ENCODE measurements at regions of chr5 and their contacts with region 1.

Region 1: DNA sequence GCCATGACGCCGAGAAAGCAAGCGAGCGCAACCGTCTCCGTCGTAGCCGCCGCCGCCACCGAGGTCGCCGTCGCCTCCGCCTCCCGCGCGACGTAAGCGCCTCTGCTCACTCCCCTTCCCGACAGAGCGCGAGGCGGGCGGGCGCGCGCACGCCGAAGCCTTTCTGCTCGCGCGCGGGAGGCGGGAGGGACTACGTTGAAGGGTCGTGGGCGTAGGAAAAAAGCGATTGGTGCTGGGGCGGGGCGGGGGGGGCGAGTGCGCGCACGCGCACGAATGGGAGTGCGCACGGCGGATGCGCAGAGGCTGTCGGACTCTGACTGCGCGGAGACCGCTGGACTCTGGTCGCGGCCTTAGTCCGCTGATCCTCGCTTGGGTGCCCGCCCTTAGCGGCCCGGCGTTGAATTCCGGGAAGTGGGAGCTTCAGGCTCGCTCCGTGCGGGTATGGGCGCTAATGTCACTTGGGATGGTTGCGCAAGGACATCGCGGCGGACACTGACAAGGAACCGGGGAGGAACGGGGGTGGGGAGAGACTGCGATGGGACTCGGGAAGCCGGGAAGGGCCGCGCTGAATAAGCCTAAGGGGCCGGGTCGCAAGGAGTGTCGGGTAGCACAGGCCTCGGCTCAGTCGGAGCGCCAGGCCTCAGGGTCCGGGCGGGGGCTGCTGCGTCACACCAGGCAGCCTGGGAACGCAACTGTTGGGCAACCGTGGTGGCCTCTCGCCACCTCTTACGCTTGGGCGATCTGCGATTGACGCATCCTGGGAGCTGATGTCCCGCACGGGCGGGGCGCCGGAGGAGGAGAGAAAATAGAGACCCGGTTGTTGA is at the start of gene CHD1:
- DNase-seq: peak; percentile 95
- H3K4me3 Mint-ChIP-seq: peak within 1 kb of the TSS; percentile 100
- H3K27ac Mint-ChIP-seq: peak within 1 kb of the TSS; percentile 98
- H3K4me1 Mint-ChIP-seq: peaks cover 65% of the 10 kb centered on the region
- H3K27me3 Mint-ChIP-seq: no peaks in the 10 kb centered on the region
- total RNA-seq, gene CHD1: 45.4 to 47.5 TPM

Region 2: DNA sequence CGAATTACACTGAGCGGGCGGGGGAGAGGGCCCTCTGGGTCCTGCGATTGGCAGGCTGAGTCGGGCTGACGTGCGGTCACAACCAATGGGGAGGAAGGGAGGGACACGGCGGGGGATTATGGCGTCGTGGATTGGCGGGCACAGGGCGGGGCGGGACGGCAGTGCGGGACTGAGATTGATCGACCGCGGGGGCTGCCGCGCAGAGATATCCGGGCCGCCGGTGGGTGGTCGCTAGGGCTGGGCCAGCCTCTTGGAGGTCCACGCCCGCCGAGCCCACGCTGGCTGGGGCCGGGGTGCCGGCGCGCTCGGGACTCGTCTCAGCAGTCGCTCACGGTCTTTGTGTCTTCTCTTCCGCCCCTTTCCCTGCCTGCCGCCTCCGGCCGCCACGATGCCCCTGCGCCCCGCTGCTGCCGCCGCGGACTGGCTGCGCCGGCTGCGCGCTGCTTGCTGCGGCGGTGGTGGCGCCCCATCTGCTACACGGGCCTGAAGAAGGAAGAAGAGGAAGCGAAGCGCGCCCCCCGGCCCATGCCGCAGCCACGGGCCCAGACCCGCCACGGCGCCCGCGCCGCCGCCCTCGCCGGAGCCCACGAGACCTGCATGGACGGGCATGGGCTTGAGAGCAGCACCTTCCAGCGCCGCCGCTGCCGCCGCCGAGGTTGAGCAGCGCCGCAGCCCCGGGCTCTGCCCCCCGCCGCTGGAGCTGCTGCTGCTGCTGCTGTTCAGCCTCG is 155.5 kb before region 1 on chr5 and contains the start of gene RGMB:
- CTCF ChIA-PET with region 1: interaction called, 4 read pairs
- POLR2A ChIA-PET with region 1: interaction called, 11 read pairs
- DNase-seq: peak; percentile 88
- H3K4me3 Mint-ChIP-seq: peak within 1 kb of the TSS; percentile 80
- H3K27ac Mint-ChIP-seq: peak within 1 kb of the TSS; percentile 60
- H3K4me1 Mint-ChIP-seq: peaks cover 47% of the 10 kb centered on the region
- H3K27me3 Mint-ChIP-seq: peaks cover 58% of the 10 kb centered on the region
- total RNA-seq, gene RGMB: 0.60 to 0.65 TPM

Region 3: DNA sequence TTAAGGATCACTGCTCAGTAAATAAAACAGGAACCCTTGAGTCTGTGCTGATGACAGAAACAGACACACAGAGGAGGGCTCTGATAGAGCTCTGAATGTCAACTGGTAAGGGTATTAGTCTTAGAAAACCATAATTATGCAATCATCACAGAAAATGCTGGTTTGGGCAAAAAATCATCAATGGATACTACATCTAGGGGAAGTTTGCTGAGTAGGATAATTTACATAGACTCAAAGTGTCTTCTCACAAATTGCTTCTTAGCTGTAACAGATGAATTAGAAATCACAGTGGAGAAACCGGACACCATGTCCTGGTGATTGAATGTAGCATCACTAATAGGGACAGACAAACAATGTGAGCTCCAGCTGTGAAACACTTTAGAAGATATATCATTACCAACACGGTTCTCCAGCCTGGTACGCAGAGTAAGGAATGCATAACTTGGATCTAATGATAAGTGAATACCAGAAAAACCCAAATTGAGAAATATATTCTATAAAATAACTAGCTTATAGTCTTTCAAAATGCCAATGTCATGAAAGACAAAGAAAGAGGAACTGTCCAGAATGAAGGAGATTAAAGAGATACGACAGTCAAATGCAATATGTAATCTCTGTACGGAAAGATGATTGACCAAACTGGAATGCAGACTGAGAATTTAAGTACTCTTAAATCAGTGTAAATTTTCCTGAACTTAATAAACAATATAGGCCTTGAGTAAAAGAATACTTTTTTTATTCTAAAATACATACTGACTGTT is 17.6 kb before region 1 on chr5:
- CTCF ChIA-PET with region 1: interaction called, 6 read pairs
- POLR2A ChIA-PET with region 1: interaction called, 77 read pairs
- DNase-seq: no peak
- H3K4me3 Mint-ChIP-seq: no peak overlapping the region
- H3K27ac Mint-ChIP-seq: no peak overlapping the region
- H3K4me1 Mint-ChIP-seq: peaks cover 35% of the 10 kb centered on the region
- H3K27me3 Mint-ChIP-seq: no peaks in the 10 kb centered on the region

Region 4: GRCh38 chr5:99025298-99026045 is 96.4 kb after region 1 on chr5:
- CTCF ChIA-PET with region 1: no interaction called
- POLR2A ChIA-PET with region 1: interaction called, 48 read pairs
- DNase-seq: no peak
- H3K4me3 Mint-ChIP-seq: no peak overlapping the region
- H3K27ac Mint-ChIP-seq: no peak overlapping the region
- H3K4me1 Mint-ChIP-seq: peaks cover 26% of the 10 kb centered on the region
- H3K27me3 Mint-ChIP-seq: peaks cover 2% of the 10 kb centered on the region

Region 5: GRCh38 chr5:99037668-99038067 is 108.6 kb after region 1 on chr5:
- CTCF ChIA-PET with region 1: interaction called, 4 read pairs
- POLR2A ChIA-PET with region 1: interaction called, 82 read pairs
- DNase-seq: peak; percentile 86
- H3K4me3 Mint-ChIP-seq: no peak overlapping the region
- H3K27ac Mint-ChIP-seq: peak overlapping the region; percentile 70
- H3K4me1 Mint-ChIP-seq: peaks cover 56% of the 10 kb centered on the region
- H3K27me3 Mint-ChIP-seq: peaks cover 6% of the 10 kb centered on the region

Region 6: GRCh38 chr5:99248066-99248465 is 319.0 kb after region 1 on chr5:
- CTCF ChIA-PET with region 1: no interaction called
- POLR2A ChIA-PET with region 1: no interaction called
- DNase-seq: no peak
- H3K4me3 Mint-ChIP-seq: no peak overlapping the region
- H3K27ac Mint-ChIP-seq: no peak overlapping the region
- H3K4me1 Mint-ChIP-seq: no peaks in the 10 kb centered on the region
- H3K27me3 Mint-ChIP-seq: no peaks in the 10 kb centered on the region